ENCODE measurements at regions of chr6 and their contacts with region 1.

Region 1: GRCh38 chr6:7312616-7313504 is at the start of gene SSR1:
- DNase-seq: peak; percentile 96 to 97
- H3K4me3 ChIP-seq: peak within 1 kb of the TSS; percentile 95
- H3K4me3 Mint-ChIP-seq: peak within 1 kb of the TSS; percentile 87
- H3K27ac Mint-ChIP-seq: peak within 1 kb of the TSS; percentile 76
- H3K4me1 ChIP-seq: peaks cover 16% of the 10 kb centered on the region
- H3K4me1 Mint-ChIP-seq: no peaks in the 10 kb centered on the region
- H3K27me3 ChIP-seq: no peaks in the 10 kb centered on the region
- H3K27me3 Mint-ChIP-seq: no peaks in the 10 kb centered on the region
- CTCF ChIP-seq: no peak
- total RNA-seq, gene SSR1: 136 and 150 TPM in 2 replicates

Region 2: DNA sequence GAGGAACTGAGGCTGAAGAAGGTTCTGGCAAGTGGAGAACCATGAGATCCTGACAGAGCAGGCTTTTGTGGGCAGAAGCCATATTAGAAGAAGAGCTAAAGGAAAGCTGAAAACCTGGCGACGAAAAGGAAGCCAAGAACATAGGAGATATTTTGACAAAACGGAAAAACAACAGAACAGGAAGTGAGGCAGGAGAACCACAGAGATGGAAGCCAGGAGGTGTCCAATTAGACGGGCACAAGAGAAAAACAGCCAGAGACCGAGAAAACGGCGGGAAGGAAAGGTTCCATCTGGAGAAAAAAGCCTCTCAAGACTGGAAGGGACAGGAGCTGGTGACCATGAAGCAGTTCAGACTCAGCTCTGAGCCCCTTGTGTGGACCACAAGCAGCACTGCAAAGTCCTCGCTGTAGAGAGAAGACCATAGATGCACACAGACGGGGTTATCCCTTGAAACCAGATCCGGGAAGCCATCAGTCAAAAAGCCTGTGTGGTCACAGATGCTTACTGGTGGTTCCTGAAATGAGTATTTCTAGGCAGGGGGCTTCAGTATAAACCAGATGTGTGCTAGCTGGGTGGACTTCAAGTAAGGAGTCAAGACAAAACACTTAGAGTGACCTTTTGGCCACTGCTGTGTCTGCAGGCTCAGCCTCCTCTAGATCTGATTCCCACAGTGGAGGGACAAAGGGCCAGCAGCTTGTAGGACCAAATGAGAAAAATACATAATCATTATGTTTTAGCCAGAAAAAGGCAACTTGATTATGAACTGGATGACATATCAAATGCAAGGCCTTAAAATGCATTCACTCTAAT is 30.6 kb before region 1 on chr6:
- CTCF ChIA-PET with region 1: no interaction called
- POLR2A ChIA-PET with region 1: no interaction called
- intact Hi-C with region 1: no loop called
- DNase-seq: no peak
- H3K4me3 ChIP-seq: no peak overlapping the region
- H3K4me3 Mint-ChIP-seq: no peak overlapping the region
- H3K27ac Mint-ChIP-seq: no peak overlapping the region
- H3K4me1 ChIP-seq: no peaks in the 10 kb centered on the region
- H3K4me1 Mint-ChIP-seq: no peaks in the 10 kb centered on the region
- H3K27me3 ChIP-seq: no peaks in the 10 kb centered on the region
- H3K27me3 Mint-ChIP-seq: no peaks in the 10 kb centered on the region
- CTCF ChIP-seq: no peak

Region 3: DNA sequence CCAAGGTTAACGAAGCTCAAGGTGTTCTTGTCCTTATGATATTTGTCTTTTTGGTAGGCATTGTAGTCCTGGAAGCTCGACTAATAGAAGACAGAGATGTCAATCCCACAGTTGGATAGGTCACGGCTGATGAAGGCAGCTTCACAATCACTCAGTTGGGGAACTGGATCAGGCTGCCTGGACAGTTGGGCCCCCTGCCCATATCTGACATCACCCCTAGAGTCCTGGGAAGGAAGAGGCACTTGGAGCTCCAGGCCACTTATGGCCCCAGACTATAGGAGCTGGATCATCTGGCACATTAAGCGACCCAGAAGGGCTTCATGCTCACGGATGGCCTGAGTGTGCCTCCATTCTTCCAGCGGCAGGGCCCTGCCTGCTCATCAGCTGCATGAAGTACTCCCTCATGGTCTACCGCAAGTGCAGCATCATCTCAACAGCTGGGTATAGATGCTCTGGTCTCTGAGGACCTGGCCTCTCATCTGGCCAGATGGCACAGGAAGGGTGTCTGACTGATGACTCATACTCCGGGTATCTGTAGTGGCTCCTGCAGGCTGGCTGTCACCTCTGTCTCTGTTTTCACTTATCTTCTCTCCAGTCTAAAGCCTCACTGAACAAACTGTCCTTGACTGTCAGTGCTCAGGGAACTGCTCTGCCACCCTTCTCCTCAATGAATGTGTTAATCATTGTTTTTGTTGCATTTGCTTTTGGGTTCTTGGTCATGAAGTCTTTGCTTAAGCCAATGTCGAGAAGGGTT is 29.3 kb after region 1 on chr6:
- CTCF ChIA-PET with region 1: no interaction called
- POLR2A ChIA-PET with region 1: no interaction called
- intact Hi-C with region 1: loop called (anchors 5 kb)
- DNase-seq: no peak
- H3K4me3 ChIP-seq: no peak overlapping the region
- H3K4me3 Mint-ChIP-seq: no peak overlapping the region
- H3K27ac Mint-ChIP-seq: no peak overlapping the region
- H3K4me1 ChIP-seq: peaks cover 4% of the 10 kb centered on the region
- H3K4me1 Mint-ChIP-seq: no peaks in the 10 kb centered on the region
- H3K27me3 ChIP-seq: no peaks in the 10 kb centered on the region
- H3K27me3 Mint-ChIP-seq: no peaks in the 10 kb centered on the region
- CTCF ChIP-seq: no peak

Region 4: DNA sequence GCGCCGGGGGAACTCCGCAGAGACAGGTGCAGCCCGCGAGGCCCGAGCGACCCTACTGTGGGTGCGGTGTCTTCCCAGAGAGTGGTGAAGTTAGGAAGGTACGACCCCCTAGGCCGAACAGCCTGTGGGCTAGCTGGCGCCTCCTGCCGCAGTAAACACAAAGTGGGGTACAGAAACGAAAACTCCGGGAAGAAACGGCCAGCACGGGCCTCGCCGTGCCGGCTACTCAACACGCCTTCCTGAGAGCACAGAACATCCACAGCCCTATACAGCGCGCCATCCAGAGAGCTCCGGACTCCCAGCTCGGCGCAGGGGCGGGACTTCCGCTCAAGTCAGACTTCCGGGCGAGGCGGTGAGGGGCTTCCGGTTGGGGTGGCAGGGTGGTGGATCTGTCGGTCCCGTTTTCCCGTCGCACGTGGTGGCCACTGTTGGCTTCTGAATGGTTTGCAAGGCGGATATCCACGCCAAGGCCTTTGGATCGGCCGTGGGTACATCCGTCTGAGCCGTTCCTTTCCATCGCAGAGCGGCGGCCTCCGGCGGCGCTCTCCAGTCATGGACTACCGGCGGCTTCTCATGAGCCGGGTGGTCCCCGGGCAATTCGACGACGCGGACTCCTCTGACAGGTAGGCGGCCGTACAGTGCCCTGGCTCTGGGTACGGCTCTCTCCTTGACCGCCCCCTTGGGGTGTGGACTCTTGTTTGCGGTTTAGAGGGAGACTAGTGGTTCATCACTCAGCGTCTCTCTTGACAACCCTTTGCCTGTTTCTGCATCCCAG is 76.8 kb after region 1 on chr6 and contains the starts of genes CAGE1 and RIOK1:
- CTCF ChIA-PET with region 1: interaction called, 3 read pairs
- POLR2A ChIA-PET with region 1: interaction called, 11 read pairs
- intact Hi-C with region 1: loop called (anchors 1 kb)
- DNase-seq: peak; percentile 95
- H3K4me3 ChIP-seq: peak within 1 kb of the TSS; percentile 59
- H3K4me3 Mint-ChIP-seq: peak within 1 kb of the TSS; percentile 77
- H3K27ac Mint-ChIP-seq: peak within 1 kb of the TSS; percentile 99
- H3K4me1 ChIP-seq: peaks cover 17% of the 10 kb centered on the region
- H3K4me1 Mint-ChIP-seq: peaks cover 34% of the 10 kb centered on the region
- H3K27me3 ChIP-seq: no peaks in the 10 kb centered on the region
- H3K27me3 Mint-ChIP-seq: no peaks in the 10 kb centered on the region
- CTCF ChIP-seq: peak in 1 of 2 experiments; percentile 27
- total RNA-seq, gene CAGE1: 0.26 and 0.59 TPM in 2 replicates
- total RNA-seq, gene RIOK1: 34.2 and 36.1 TPM in 2 replicates

Measured in Caco-2 (cell line).